Endothelial cell of umbilical vein (primary cell): ENCODE measurements at regions of chr18 and their contacts with region 1.

Region 1: GRCh38 chr18:30288662-30289414 is 753.7 kb downstream of the DSC3 start:
- DNase-seq: no peak
- H3K4me3 ChIP-seq: no peak overlapping the region
- H3K27ac ChIP-seq: no peak overlapping the region
- H3K4me1 ChIP-seq: no peaks in the 10 kb centered on the region
- H3K27me3 ChIP-seq: no peaks in the 10 kb centered on the region
- CTCF ChIP-seq: no peak
- POLR2A ChIP-seq: no peak

Region 2: DNA sequence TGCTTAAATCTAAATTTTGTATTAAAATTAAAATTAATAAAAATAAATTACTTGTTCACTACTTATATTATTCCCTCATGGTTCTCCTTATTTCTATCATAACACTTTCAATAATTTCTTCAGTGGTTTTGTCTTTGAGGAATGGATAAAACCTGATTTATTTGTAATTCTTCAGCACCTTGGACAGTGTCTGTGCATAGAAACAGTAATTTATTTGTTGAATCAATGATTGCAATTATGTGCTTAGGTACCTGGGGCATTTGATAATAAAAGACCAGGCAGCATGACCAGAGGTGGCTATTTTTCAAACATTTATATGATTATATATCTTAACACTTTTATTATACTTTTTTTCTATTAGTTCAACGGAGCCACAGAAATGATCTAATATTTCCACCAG is 309.0 kb before region 1 on chr18:
- CTCF ChIA-PET with region 1: no interaction called
- POLR2A ChIA-PET with region 1: no interaction called
- dilution Hi-C with region 1: no loop called
- intact Hi-C with region 1: no loop called
- DNase-seq: no peak
- H3K4me3 ChIP-seq: no peak overlapping the region
- H3K27ac ChIP-seq: no peak overlapping the region
- H3K4me1 ChIP-seq: no peaks in the 10 kb centered on the region
- H3K27me3 ChIP-seq: no peaks in the 10 kb centered on the region
- CTCF ChIP-seq: no peak
- POLR2A ChIP-seq: no peak

Region 3: DNA sequence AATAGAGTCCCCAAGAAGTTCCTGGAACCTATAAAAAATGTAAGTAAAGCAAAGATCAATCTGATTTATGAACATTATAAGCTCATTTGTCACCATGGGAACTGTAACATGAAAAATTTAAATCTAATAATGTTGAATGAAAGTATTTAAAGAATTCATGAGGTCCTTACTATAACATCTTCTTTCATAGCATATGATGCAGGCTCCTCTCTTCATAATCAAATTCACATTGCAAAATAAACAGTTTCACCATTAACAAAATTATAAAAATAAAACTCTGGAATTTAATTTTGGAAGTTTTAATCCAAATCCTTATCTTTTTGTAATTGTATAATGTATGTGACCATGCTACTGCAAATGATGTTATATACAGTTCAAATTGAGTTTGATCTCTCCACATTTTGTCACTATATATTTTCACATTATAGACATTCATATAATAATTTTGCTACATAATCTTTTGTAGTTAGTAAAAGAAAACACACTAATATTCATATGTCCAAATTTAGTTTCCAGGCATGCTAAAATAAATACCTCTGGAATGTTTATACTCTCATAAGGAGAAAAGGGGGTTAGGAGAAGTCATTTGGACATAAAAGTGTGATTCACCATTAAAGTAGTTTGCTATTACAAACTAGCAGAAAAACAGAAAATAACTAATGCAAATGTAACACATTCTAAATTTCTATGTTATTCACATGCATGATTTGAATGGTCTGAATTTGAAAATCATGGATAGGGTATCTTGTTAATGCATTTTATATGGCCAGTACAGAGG is 200.4 kb before region 1 on chr18:
- CTCF ChIA-PET with region 1: no interaction called
- POLR2A ChIA-PET with region 1: no interaction called
- dilution Hi-C with region 1: no loop called
- intact Hi-C with region 1: no loop called
- DNase-seq: no peak
- H3K4me3 ChIP-seq: no peak overlapping the region
- H3K27ac ChIP-seq: no peak overlapping the region
- H3K4me1 ChIP-seq: no peaks in the 10 kb centered on the region
- H3K27me3 ChIP-seq: no peaks in the 10 kb centered on the region
- CTCF ChIP-seq: no peak
- POLR2A ChIP-seq: no peak

Region 4: GRCh38 chr18:30302181-30302580 is 13.3 kb after region 1 on chr18:
- CTCF ChIA-PET with region 1: no interaction called
- POLR2A ChIA-PET with region 1: no interaction called
- dilution Hi-C with region 1: no loop called
- intact Hi-C with region 1: loop called (anchors 1 kb)
- DNase-seq: no peak
- H3K4me3 ChIP-seq: no peak overlapping the region
- H3K27ac ChIP-seq: no peak overlapping the region
- H3K4me1 ChIP-seq: no peaks in the 10 kb centered on the region
- H3K27me3 ChIP-seq: no peaks in the 10 kb centered on the region
- CTCF ChIP-seq: no peak
- POLR2A ChIP-seq: no peak

Region 5: GRCh38 chr18:30481871-30482270 is 193.0 kb after region 1 on chr18:
- CTCF ChIA-PET with region 1: no interaction called
- POLR2A ChIA-PET with region 1: no interaction called
- dilution Hi-C with region 1: no loop called
- intact Hi-C with region 1: no loop called
- DNase-seq: no peak
- H3K4me3 ChIP-seq: no peak overlapping the region
- H3K27ac ChIP-seq: no peak overlapping the region
- H3K4me1 ChIP-seq: no peaks in the 10 kb centered on the region
- H3K27me3 ChIP-seq: no peaks in the 10 kb centered on the region
- CTCF ChIP-seq: no peak
- POLR2A ChIP-seq: no peak